Activated T-helper 1 cell treated with anti-CD3 and anti-CD28 coated beads, Interleukin-12 subunit alpha, Interleukin-12 subunit beta, Interleukin-2, Interleukin-4 antibody, amounts not matched to agents 30 ng/mL and 10 ng/mL and 1 ng/mL, durations not matched to agents 14 hours and 24 hours and 36 hours (primary cell): ENCODE measurements at regions of chr4 and their contacts with region 1.

Region 1: GRCh38 chr4:88378691-88379559 is at the start of gene HERC6:
- DNase-seq: peak; percentile 80
- H3K4me3 Mint-ChIP-seq: peak within 1 kb of the TSS; percentile 89
- H3K27ac Mint-ChIP-seq: peak within 1 kb of the TSS; percentile 81
- H3K4me1 Mint-ChIP-seq: peaks cover 47% of the 10 kb centered on the region
- H3K27me3 Mint-ChIP-seq: no peaks in the 10 kb centered on the region
- total RNA-seq, gene HERC6: 6.0 and 9.1 TPM in 2 replicates

Region 2: GRCh38 chr4:88007304-88008121 is 371.4 kb before region 1 on chr4 and contains the start of gene PKD2:
- intact Hi-C with region 1: loop called (anchors 5 kb)
- DNase-seq: peak; percentile 79
- H3K4me3 Mint-ChIP-seq: peak within 1 kb of the TSS; percentile 89
- H3K27ac Mint-ChIP-seq: peak within 1 kb of the TSS; percentile 80
- H3K4me1 Mint-ChIP-seq: peaks cover 41% of the 10 kb centered on the region
- H3K27me3 Mint-ChIP-seq: peaks cover 20% of the 10 kb centered on the region
- total RNA-seq, gene PKD2: 10.1 and 11.7 TPM in 2 replicates

Region 3: DNA sequence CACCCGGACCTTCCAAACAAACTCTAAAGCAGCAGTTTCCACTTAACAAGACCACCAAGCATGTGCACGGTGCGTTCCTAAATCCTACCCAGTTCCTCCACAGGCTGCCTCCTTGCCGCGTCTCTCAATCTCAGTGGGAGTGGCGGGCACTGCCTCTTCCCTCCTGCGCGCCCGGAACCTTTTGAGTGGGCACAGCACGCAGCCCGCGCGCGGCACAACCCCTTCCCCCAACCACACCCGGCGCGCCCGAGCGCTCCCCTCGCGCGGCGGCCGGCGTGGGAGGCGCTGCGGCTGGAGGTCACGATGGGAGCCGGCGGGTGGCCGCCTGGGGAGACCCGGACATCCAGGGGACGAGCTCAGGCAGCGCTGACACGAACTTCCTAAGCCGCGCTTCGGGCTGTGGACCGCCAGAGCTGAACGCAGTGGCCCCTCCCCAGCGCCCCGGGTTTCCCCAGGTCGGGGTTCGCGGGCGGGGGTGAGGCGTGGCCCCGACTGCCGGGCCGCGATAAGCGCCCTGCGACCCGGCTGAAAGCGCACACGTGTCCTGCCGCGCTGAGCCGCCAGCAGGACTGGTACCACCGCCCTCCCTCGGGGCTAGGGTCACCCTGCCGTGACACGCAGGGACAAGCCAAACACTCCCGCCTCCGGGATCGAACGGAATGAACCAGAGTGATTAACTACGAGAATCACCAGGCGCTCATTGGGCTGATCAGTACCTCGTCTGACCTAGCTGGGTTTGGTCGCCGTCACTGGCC is 220.3 kb before region 1 on chr4 and contains the start of gene ABCG2:
- intact Hi-C with region 1: loop called (anchors 5 kb)
- DNase-seq: peak; percentile 46
- H3K4me3 Mint-ChIP-seq: peak within 1 kb of the TSS; percentile 80
- H3K27ac Mint-ChIP-seq: peak within 1 kb of the TSS; percentile 16
- H3K4me1 Mint-ChIP-seq: peaks cover 17% of the 10 kb centered on the region
- H3K27me3 Mint-ChIP-seq: peaks cover 18% of the 10 kb centered on the region
- total RNA-seq, gene ABCG2: 0.34 TPM in 2 replicates

Region 4: DNA sequence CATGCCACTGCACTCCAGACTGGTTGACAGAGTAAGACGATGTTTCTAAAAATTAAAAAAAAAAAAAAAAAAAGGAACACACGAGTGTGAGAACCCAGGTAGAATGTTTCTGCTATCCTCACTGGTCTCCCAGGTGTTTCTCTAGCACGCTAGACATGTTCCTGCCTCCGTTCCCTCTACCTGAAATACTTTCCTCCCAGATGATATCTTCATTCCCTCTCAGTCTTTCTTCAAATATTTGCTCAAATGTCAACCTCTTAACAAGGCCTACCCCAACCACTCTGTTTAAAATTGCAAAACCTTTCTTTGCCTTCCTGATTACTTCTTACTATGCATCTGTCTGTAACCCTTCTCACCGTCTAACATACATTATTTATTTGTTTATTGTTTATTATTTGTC is 161.0 kb before region 1 on chr4:
- intact Hi-C with region 1: loop called (anchors 2 kb)
- DNase-seq: no peak
- H3K4me3 Mint-ChIP-seq: no peak overlapping the region
- H3K27ac Mint-ChIP-seq: no peak overlapping the region
- H3K4me1 Mint-ChIP-seq: peaks cover 5% of the 10 kb centered on the region
- H3K27me3 Mint-ChIP-seq: peaks cover 5% of the 10 kb centered on the region

Region 5: DNA sequence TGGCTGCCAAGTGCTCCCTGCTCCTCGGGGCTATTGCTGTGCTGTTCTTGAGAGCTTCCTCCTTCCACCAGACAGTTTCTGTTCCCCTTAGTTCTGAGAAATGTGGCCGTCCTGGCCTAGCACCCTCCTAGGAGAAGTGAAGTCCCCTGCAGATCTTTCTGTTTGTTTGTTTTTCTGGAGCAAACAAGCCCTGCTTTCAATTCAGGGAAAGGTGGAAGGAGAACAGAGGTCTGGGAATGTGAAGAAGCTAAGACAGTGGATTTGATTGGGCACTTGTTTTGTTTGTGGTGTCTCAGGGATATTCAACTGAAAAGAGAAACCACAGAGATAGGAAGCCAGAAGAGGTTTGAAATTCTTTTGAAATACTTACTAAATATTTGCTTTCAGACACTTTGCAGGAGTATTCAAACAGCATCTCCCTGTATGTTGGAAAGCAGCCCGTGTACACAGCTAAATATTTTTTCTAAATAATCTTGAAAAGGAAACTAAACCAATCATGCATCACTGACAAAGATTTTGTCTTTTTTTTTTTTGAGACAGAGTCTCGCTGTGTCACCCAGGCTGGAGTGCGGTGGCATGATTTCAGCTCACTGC is 58.0 kb before region 1 on chr4:
- intact Hi-C with region 1: loop called (anchors 2 kb)
- DNase-seq: peak; percentile 36
- H3K4me3 Mint-ChIP-seq: peak overlapping the region; percentile 82
- H3K27ac Mint-ChIP-seq: peak overlapping the region; percentile 95
- H3K4me1 Mint-ChIP-seq: peaks cover 22% of the 10 kb centered on the region
- H3K27me3 Mint-ChIP-seq: no peaks in the 10 kb centered on the region